H1 (cell line): ENCODE measurements at regions of chr2 and their contacts with region 1.

Region 1: DNA sequence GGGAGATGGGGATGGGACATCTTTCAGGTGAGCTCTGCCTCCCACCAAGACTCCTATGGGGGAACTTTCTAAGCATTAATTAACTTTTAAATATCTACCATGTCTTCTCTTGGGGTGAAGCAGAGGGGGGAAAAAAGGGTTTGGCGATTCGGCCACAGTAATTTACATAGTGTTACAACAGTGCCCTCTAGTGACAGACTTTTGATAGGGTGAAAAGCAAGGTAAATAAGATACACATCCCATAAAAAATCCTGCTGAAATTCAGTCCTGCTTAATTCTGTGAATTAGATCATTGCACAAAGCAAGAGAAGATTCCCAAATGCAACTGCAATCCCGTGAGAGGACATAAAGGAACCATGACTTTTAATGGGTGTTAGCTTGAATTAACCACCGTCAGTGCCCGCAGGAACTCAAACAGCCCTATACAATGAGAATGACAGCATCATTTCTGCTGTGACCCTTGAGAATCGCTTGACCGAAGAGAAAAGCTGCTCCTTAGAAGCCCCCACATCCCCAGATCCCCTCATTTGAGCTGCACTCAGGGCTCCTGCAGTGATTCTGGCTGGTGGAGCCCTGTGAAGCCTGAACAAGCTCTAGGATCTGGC is 32.8 kb downstream of the FAM124B start:
- DNase-seq: no peak
- H3K4me3 ChIP-seq: no peak overlapping the region
- H3K27ac ChIP-seq: no peak overlapping the region
- H3K4me1 ChIP-seq: no peaks in the 10 kb centered on the region; a peak in 1 of 7 replicates
- H3K27me3 ChIP-seq: no peaks in the 10 kb centered on the region
- CTCF ChIP-seq: peak in 2 of 3 experiments; percentile 48 to 65; a peak in 3 of 4 replicates
- EP300 ChIP-seq: no peak
- POLR2A ChIP-seq: no peak
- RAD21 ChIP-seq: peak; percentile 54 to 63

Region 2: GRCh38 chr2:224347176-224348051 is 21.7 kb before region 1 on chr2:
- CTCF ChIA-PET with region 1: interaction called, 14 read pairs
- POLR2A ChIA-PET with region 1: no interaction called
- DNase-seq: no peak
- H3K4me3 ChIP-seq: no peak overlapping the region
- H3K27ac ChIP-seq: no peak overlapping the region
- H3K4me1 ChIP-seq: no peaks in the 10 kb centered on the region
- H3K27me3 ChIP-seq: no peaks in the 10 kb centered on the region
- CTCF ChIP-seq: no peak
- EP300 ChIP-seq: no peak
- POLR2A ChIP-seq: no peak
- RAD21 ChIP-seq: no peak

Region 3: GRCh38 chr2:224382973-224383555 is 13.9 kb after region 1 on chr2:
- CTCF ChIA-PET with region 1: interaction called, 21 read pairs
- POLR2A ChIA-PET with region 1: interaction called, 3 read pairs
- DNase-seq: no peak
- H3K4me3 ChIP-seq: no peak overlapping the region
- H3K27ac ChIP-seq: no peak overlapping the region
- H3K4me1 ChIP-seq: no peaks in the 10 kb centered on the region
- H3K27me3 ChIP-seq: no peaks in the 10 kb centered on the region
- CTCF ChIP-seq: no peak
- EP300 ChIP-seq: no peak
- POLR2A ChIP-seq: no peak
- RAD21 ChIP-seq: no peak

Region 4: GRCh38 chr2:224401641-224402342 is 32.7 kb after region 1 on chr2 and contains the start of gene FAM124B:
- CTCF ChIA-PET with region 1: interaction called, 21 read pairs
- POLR2A ChIA-PET with region 1: no interaction called
- DNase-seq: no peak
- H3K4me3 ChIP-seq: no peak within 1 kb of the TSS
- H3K27ac ChIP-seq: no peak within 1 kb of the TSS; the same call in 1 of the 2 replicates
- H3K4me1 ChIP-seq: peaks cover 0 to 2% (median 1%) of the 10 kb centered on the region in 4 experiments; a peak in 2 of 7 replicates
- H3K27me3 ChIP-seq: no peaks in the 10 kb centered on the region
- CTCF ChIP-seq: no peak
- EP300 ChIP-seq: no peak
- POLR2A ChIP-seq: no peak
- RAD21 ChIP-seq: no peak
- total RNA-seq, gene FAM124B: 2.0 and 2.6 TPM in 2 replicates

Region 5: DNA sequence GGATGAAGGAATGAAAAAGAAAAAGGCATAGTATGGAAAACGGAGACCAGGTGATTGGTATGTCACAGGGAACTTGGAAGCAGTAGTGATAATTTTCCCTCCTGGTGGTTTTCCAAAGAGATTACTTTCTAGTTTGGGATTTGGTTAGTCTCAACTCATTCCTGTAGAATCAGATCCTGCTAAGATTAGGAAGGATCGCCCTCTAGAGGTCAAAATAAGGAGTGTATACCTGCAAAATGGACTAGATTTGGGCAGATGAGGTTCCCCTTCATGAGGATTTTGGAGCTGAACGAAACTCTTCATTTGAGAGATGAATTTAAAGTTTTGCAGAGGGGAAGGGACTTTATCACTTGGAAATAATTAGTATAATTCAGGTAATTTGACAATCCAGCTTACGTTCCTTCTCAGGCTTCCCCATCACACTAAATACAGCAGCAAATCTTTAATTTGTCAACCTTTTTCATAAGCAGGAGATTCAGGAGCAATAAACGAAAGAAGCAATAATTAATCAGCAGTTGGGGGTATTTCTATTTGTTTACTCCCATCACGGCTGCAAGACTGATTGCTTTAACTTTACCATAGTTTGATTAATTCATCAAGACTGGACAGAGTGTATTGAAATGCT is 281.8 kb after region 1 on chr2:
- CTCF ChIA-PET with region 1: interaction called, 45 read pairs
- POLR2A ChIA-PET with region 1: interaction called, 3 read pairs
- DNase-seq: no peak
- H3K4me3 ChIP-seq: no peak overlapping the region
- H3K27ac ChIP-seq: no peak overlapping the region
- H3K4me1 ChIP-seq: no peaks in the 10 kb centered on the region
- H3K27me3 ChIP-seq: no peaks in the 10 kb centered on the region
- CTCF ChIP-seq: peak in 2 of 3 experiments; percentile 62 to 77; a peak in 2 of 4 replicates
- EP300 ChIP-seq: no peak
- POLR2A ChIP-seq: no peak
- RAD21 ChIP-seq: peak; percentile 86